Heart left ventricle (tissue), 16 donors: ENCODE measurements at regions of chr20 and their contacts with region 1.

Region 1: DNA sequence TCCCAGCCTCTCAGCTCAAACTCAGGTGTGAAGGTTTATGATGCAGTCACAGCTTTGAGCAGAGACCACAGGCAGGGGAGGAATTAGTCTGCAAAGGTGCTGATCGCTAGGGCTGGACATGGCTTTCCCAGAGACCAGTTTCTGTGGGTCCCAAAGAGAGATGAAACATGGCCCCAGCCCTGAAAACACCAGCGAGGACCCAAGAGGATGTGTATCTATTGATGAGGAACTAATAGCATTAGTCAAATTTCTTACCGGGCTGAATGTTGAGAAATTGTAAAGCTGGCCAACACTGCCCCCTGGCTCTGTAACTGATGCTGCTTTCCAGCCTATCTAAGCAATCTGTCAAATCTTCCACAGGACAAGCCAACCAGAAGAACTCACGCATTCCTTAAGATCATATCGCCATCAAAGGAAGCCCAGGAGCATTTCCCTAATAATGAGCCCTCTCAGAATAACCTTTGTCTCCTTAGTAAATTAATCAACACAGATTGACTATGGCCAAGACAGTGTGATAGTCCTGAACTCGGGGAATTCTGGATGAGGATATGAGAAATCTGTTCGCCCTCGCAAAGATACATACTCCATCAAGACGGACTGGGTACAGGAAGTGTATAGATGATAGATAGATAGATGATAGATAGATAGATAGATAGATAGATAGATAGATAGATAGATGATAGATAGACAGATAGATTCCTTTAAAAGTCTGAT is 7.8 kb upstream of the ACSS1 start:
- DNase-seq: peak in 2 of 5 donors; percentile 50 to 53
- ATAC-seq: peak; percentile 67 to 88 (median 73)
- H3K4me3 ChIP-seq: peak overlapping the region in 1 of 12 donors; percentile 10
- H3K27ac ChIP-seq: no peak overlapping the region
- H3K4me1 ChIP-seq: peaks cover 0 to 20% (median 5%) of the 10 kb centered on the region in 12 donors
- H3K27me3 ChIP-seq: peaks cover 0 to 16% (median 3%) of the 10 kb centered on the region in 9 donors
- CTCF ChIP-seq: peak; percentile 68 to 95 (median 86)
- POLR2A ChIP-seq: no peak

Region 2: DNA sequence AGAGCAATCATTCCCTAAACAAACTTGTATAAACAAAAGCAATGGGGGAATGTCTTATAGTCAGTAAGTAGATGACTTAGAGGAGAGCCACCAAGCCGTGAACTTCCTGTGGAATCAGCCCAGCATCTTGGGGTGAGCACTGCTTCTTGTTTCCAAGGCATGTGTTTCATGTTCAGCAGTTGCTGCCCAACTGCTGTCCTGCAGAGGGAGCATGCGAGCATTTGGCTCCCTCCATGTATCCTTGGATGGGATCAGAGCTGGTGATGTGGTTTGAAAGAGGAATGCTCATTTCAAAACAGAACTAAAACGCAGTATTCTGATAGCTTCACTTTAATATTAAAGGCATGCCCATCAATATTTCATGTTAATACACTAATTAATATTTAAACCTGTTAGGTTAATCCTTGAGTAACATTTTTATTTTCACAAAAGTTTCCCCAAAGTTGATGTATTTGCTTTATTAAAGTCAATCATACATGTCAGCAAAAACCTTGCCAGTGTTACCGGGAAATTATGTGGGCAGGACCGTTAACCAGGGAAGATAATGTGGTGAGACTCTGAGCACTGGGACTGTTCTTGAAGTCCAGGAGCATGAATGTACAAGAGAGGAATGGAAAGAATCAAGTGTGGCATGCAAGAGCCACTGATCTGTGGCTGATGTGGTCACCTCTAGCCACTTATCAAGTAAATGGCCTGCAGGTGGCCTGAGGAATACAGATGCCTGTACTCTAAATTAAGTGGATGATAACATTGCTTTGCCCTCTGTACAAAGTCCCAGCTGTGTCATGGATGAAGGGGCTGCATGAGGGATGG is 905.0 kb before region 1 on chr20:
- intact Hi-C with region 1: loop called in 1 of 10 experiments (anchors 10 kb)
- DNase-seq: peak in 3 of 5 donors; percentile 14 to 42 (median 39)
- ATAC-seq: peak in 3 of 4 donors; percentile 48 to 84 (median 73)
- H3K4me3 ChIP-seq: no peak overlapping the region
- H3K27ac ChIP-seq: no peak overlapping the region
- H3K4me1 ChIP-seq: peaks cover 0 to 5% (median 0%) of the 10 kb centered on the region in 12 donors
- H3K27me3 ChIP-seq: no peaks in the 10 kb centered on the region
- CTCF ChIP-seq: peak; percentile 49 to 88 (median 70)
- POLR2A ChIP-seq: no peak

Region 3: GRCh38 chr20:25032478-25033280 is 33.1 kb before region 1 on chr20:
- intact Hi-C with region 1: loop called in 3 of 10 experiments (anchors 5 kb)
- DNase-seq: peak in 4 of 5 donors; percentile 64 to 76 (median 72)
- ATAC-seq: peak; percentile 43 to 86 (median 72)
- H3K4me3 ChIP-seq: peak overlapping the region in 7 of 12 donors; percentile 11 to 35 (median 16)
- H3K27ac ChIP-seq: peak overlapping the region; percentile 53 to 88 (median 76)
- H3K4me1 ChIP-seq: peaks cover 19 to 77% (median 65%) of the 10 kb centered on the region in 12 donors
- H3K27me3 ChIP-seq: no peaks in the 10 kb centered on the region
- CTCF ChIP-seq: peak in 3 of 12 donors; percentile 13 to 40 (median 29)
- POLR2A ChIP-seq: no peak

Region 4: GRCh38 chr20:25178563-25179438 is 113.0 kb after region 1 on chr20:
- intact Hi-C with region 1: loop called in 6 of 10 experiments (anchors 5 kb)
- DNase-seq: no peak
- ATAC-seq: peak; percentile 67 to 90 (median 82)
- H3K4me3 ChIP-seq: no peak overlapping the region
- H3K27ac ChIP-seq: no peak overlapping the region
- H3K4me1 ChIP-seq: peaks cover 0 to 6% (median 0%) of the 10 kb centered on the region in 12 donors
- H3K27me3 ChIP-seq: no peaks in the 10 kb centered on the region
- CTCF ChIP-seq: peak; percentile 54 to 80 (median 70)
- POLR2A ChIP-seq: no peak

Region 5: DNA sequence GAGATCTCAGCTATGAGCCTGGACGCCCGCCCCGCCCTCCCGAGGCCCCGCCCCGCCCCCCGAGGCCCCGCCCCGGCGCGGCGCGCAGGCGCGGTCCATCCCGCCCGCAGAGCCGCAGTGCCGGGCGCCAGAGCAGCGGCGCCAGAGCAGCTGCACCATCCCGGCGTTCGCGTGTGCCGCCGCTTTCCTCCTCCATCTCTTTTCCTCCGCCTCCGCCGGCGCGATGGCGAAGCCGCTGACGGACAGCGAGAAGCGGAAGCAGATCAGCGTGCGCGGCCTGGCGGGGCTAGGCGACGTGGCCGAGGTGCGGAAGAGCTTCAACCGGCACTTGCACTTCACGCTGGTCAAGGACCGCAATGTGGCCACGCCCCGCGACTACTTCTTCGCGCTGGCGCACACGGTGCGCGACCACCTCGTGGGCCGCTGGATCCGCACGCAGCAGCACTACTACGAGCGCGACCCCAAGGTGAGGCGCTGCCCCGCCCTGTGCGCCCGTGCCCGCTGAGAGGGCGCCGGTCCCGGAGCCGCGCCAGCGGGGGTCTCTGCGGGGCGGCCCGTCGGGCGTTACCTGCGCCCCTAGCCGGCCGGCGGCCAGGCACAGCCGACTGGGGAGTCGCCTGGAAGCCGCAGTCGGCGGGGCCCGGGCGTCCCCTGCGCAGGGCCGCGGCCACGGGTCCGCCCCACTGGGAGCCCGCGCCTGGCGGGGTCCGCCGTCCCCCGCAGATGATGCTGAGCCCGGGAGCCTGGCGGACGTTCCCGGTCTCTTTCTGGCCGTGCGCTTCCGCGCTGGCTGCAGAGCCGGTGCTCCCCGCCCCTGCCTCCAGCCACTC is 182.4 kb after region 1 on chr20 and contains the start of gene PYGB:
- intact Hi-C with region 1: loop called in 1 of 10 experiments (anchors 10 kb)
- DNase-seq: peak; percentile 79 to 89 (median 83)
- ATAC-seq: peak; percentile 33 to 91 (median 76)
- H3K4me3 ChIP-seq: peak within 1 kb of the TSS; percentile 72 to 99 (median 92)
- H3K27ac ChIP-seq: peak within 1 kb of the TSS; percentile 86 to 99 (median 96)
- H3K4me1 ChIP-seq: peaks cover 0 to 61% (median 34%) of the 10 kb centered on the region in 12 donors
- H3K27me3 ChIP-seq: no peaks in the 10 kb centered on the region
- CTCF ChIP-seq: no peak
- POLR2A ChIP-seq: peak; percentile 79 to 97
- total RNA-seq, gene PYGB: 172 to 450 (median 233) TPM

Region 6: GRCh38 chr20:25399037-25399430 is 333.3 kb after region 1 on chr20:
- intact Hi-C with region 1: loop called in 9 of 10 experiments (anchors 5 to 10 kb)
- DNase-seq: peak in 1 of 5 donors; percentile 29
- ATAC-seq: peak in 3 of 4 donors; percentile 84 to 88 (median 86)
- H3K4me3 ChIP-seq: no peak overlapping the region
- H3K27ac ChIP-seq: no peak overlapping the region
- H3K4me1 ChIP-seq: peaks cover 0 to 8% (median 0%) of the 10 kb centered on the region in 12 donors
- H3K27me3 ChIP-seq: no peaks in the 10 kb centered on the region
- CTCF ChIP-seq: peak; percentile 45 to 75 (median 63)
- POLR2A ChIP-seq: no peak

Region 7: GRCh38 chr20:25407311-25408169 is 341.8 kb after region 1 on chr20 and contains the start of gene GINS1:
- intact Hi-C with region 1: loop called in 3 of 10 experiments (anchors 10 kb)
- DNase-seq: peak; percentile 82 to 91 (median 85)
- ATAC-seq: peak; percentile 68 to 98 (median 94)
- H3K4me3 ChIP-seq: peak within 1 kb of the TSS; percentile 30 to 84 (median 58)
- H3K27ac ChIP-seq: peak within 1 kb of the TSS in 8 of 12 donors; percentile 2 to 36 (median 26)
- H3K4me1 ChIP-seq: peaks cover 0 to 19% (median 7%) of the 10 kb centered on the region in 12 donors
- H3K27me3 ChIP-seq: no peaks in the 10 kb centered on the region
- CTCF ChIP-seq: no peak
- POLR2A ChIP-seq: no peak
- total RNA-seq, gene GINS1: 0.19 to 3.1 (median 0.36) TPM